Left ventricle myocardium superior (tissue), 1 donor: ENCODE measurements at regions of chr2 and their contacts with region 1.

Region 1: GRCh38 chr2:134245340-134245984 is 8.4 kb upstream of the MGAT5 start:
- DNase-seq: peak; percentile 77
- ATAC-seq: peak; percentile 62

Region 2: DNA sequence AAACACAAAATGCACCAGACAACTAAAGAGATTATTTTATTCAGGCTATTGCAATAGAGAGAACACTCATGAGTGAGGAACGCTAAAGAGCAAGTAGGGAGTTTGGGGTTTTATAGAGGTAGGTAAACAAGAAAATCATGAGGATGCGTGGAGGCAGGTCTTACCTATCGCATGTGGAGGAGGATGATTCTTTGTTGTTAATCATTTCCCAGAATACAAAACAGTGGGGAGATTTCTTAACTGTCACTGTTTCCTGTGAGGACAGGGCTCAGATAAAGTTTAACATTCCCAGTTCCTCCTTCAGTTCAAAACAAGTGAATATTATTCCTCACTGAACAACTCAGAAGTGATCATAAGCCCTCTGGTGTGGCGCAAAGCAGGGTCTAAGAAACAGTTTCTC is 147.7 kb before region 1 on chr2:
- intact Hi-C with region 1: no loop called
- DNase-seq: no peak
- ATAC-seq: no peak

Region 3: DNA sequence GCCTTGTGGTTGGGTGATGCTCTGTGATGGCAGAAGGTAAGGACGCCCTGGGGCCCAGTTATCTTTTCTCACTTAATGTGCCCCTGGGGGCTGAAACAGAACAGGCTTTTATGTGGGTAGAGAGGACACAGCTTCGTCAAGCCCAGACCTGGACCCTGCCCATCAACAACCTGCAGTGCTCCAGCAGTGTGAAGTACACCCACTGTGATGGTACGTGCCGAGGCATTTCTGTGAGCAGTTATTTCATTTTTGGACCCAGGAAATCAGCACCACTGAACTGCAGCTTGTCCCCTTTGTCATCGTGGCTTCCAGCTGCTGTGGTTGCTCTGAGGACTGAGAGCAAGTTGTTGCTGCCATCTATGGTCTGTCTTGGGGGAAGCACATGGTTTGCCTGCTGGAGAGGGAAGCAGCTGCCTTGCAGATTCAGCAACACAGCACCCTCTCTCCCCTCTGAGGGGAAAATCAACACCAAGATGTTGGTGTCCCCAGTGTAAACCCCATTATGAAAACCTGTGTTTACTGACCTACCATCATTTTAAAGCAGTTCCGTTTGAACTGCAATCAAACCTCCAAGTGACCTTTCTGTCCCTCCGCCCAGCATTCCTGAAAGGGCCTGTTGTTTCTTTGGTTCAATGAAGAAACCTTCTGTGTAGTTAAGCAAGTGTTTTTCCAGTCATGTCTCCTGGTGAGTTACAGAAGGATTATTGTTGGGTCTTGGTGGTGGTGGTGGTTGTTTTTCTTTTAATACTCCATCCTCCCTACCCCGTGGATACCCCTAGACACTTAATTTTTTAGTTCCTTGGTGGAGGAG is 166.6 kb after region 1 on chr2:
- intact Hi-C with region 1: loop called (anchors 10 kb)
- DNase-seq: peak; percentile 57
- ATAC-seq: peak; percentile 95